ENCODE measurements at regions of chr1 and their contacts with region 1.

Region 1: GRCh38 chr1:175373786-175374623 is 181.4 kb upstream of the KIAA0040 start:
- DNase-seq: no peak
- ATAC-seq: peak; percentile 91
- H3K4me3 ChIP-seq: no peak overlapping the region
- H3K27ac ChIP-seq: no peak overlapping the region
- H3K4me1 ChIP-seq: no peaks in the 10 kb centered on the region
- H3K27me3 ChIP-seq: peaks cover 0 to 2% of the 10 kb centered on the region in 2 experiments; a peak in 3 of 4 replicates
- CTCF ChIP-seq: peak; percentile 65 to 79 (median 75)
- EP300 ChIP-seq: no peak
- POLR2A ChIP-seq: no peak
- RAD21 ChIP-seq: peak; percentile 81

Region 2: DNA sequence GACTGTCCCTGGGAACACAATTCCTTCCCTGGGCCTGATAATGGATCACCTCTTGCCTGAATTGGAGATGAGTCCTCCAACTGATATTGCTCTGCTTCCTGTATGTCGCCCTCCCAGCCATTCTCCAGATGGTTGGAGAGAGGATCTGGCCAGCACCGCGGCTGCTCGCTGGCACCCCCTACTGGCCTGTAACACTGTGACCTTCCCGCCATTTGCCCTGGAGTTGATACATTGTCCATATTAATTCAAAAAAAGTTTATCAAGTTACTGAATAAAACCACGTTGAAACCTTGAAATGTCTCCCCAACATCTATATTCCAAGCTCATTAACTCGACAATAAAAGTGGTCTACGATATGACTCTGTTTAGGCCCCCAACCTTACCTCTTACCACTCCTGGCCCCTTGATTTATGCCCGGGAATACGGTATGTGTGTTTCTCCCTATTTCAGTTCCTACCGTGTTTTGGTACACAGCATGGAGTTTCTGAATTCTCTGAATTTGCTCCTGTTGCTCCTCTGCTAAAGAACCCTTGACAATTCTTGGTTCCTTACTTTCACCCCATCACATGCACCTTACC is 60.4 kb after region 1 on chr1:
- CTCF ChIA-PET with region 1: interaction called, 9 read pairs
- POLR2A ChIA-PET with region 1: no interaction called
- RAD21 ChIA-PET with region 1: no interaction called
- SMC1A ChIA-PET with region 1: interaction called, 6 read pairs
- in situ Hi-C with region 1: no loop called
- intact Hi-C with region 1: loop called (anchors 1 kb)
- DNase-seq: no peak
- ATAC-seq: peak; percentile 46; the same call in 2 of the 3 replicates
- H3K4me3 ChIP-seq: no peak overlapping the region
- H3K27ac ChIP-seq: no peak overlapping the region
- H3K4me1 ChIP-seq: no peaks in the 10 kb centered on the region
- H3K27me3 ChIP-seq: no peaks in the 10 kb centered on the region
- CTCF ChIP-seq: peak; percentile 38 to 73 (median 58)
- EP300 ChIP-seq: no peak
- POLR2A ChIP-seq: no peak
- RAD21 ChIP-seq: peak; percentile 46

Region 3: GRCh38 chr1:175470078-175470477 is 96.1 kb after region 1 on chr1:
- CTCF ChIA-PET with region 1: no interaction called
- POLR2A ChIA-PET with region 1: no interaction called
- RAD21 ChIA-PET with region 1: no interaction called
- SMC1A ChIA-PET with region 1: no interaction called
- in situ Hi-C with region 1: no loop called
- intact Hi-C with region 1: no loop called
- DNase-seq: no peak
- ATAC-seq: no peak
- H3K4me3 ChIP-seq: no peak overlapping the region
- H3K27ac ChIP-seq: no peak overlapping the region
- H3K4me1 ChIP-seq: no peaks in the 10 kb centered on the region
- H3K27me3 ChIP-seq: peaks cover 2 to 6% of the 10 kb centered on the region in 2 experiments; a peak in 2 of 4 replicates
- CTCF ChIP-seq: no peak
- EP300 ChIP-seq: no peak
- POLR2A ChIP-seq: no peak
- RAD21 ChIP-seq: no peak

Region 4: GRCh38 chr1:175481126-175482066 is 107.4 kb after region 1 on chr1:
- CTCF ChIA-PET with region 1: no interaction called
- POLR2A ChIA-PET with region 1: no interaction called
- RAD21 ChIA-PET with region 1: no interaction called
- SMC1A ChIA-PET with region 1: no interaction called
- in situ Hi-C with region 1: no loop called
- intact Hi-C with region 1: loop called (anchors 2 kb)
- DNase-seq: no peak
- ATAC-seq: peak; percentile 79
- H3K4me3 ChIP-seq: no peak overlapping the region
- H3K27ac ChIP-seq: no peak overlapping the region
- H3K4me1 ChIP-seq: no peaks in the 10 kb centered on the region
- H3K27me3 ChIP-seq: peaks cover 0 to 5% of the 10 kb centered on the region in 2 experiments; a peak in 1 of 4 replicates
- CTCF ChIP-seq: peak; percentile 53 to 67 (median 66); a peak in 5 of 6 replicates
- EP300 ChIP-seq: no peak
- POLR2A ChIP-seq: no peak
- RAD21 ChIP-seq: peak; percentile 71

Region 5: GRCh38 chr1:175520186-175520585 is 146.2 kb after region 1 on chr1:
- CTCF ChIA-PET with region 1: no interaction called
- POLR2A ChIA-PET with region 1: no interaction called
- RAD21 ChIA-PET with region 1: no interaction called
- SMC1A ChIA-PET with region 1: no interaction called
- in situ Hi-C with region 1: no loop called
- intact Hi-C with region 1: no loop called
- DNase-seq: no peak
- ATAC-seq: no peak
- H3K4me3 ChIP-seq: no peak overlapping the region
- H3K27ac ChIP-seq: no peak overlapping the region
- H3K4me1 ChIP-seq: no peaks in the 10 kb centered on the region
- H3K27me3 ChIP-seq: no peaks in the 10 kb centered on the region; a peak in 2 of 4 replicates
- CTCF ChIP-seq: no peak
- EP300 ChIP-seq: no peak
- POLR2A ChIP-seq: no peak
- RAD21 ChIP-seq: no peak

Region 6: DNA sequence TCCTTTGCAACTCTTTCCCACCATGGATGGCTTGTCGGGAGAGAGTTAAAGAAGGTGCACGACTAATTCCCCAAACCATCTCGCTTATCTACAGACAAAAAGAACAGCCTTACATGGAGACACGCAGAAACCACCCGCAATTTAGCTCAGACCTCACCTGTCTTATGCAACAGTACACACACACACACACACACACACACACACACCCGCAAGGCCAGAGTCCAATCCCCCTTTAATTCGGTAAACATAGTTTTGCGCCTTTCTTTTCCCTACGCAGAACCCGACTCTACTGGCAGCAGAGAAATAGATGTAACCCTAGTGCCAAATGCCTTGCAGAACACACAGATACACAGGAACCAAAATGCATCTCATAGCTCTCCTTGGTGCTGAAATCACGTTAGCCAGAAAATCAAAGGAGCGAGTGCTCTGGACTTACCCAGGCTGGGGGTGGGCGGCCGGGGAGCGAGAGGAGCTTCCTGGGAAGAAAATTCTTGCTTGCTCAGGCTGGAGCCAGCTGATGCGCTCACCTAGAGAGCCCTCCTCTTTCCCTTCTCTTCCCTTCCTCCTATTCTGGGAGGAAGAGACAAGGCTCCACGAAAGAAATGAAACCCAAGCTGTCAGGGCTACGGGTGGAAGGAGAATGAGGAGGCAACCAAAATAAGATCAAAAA is 368.9 kb after region 1 on chr1:
- CTCF ChIA-PET with region 1: interaction called, 3 read pairs
- POLR2A ChIA-PET with region 1: no interaction called
- RAD21 ChIA-PET with region 1: interaction called, 4 read pairs
- SMC1A ChIA-PET with region 1: interaction called, 4 read pairs
- in situ Hi-C with region 1: no loop called
- intact Hi-C with region 1: loop called (anchors 2 kb)
- DNase-seq: no peak
- ATAC-seq: peak; percentile 66
- H3K4me3 ChIP-seq: no peak overlapping the region
- H3K27ac ChIP-seq: no peak overlapping the region
- H3K4me1 ChIP-seq: no peaks in the 10 kb centered on the region
- H3K27me3 ChIP-seq: 0 out of 4 replicates have a peak, but pooled peaks cover 0 to 4% of the 10 kb centered on the region in 2 experiments
- CTCF ChIP-seq: no peak
- EP300 ChIP-seq: no peak
- POLR2A ChIP-seq: no peak
- RAD21 ChIP-seq: no peak

Region 7: GRCh38 chr1:175887981-175888433 is 514.0 kb after region 1 on chr1:
- CTCF ChIA-PET with region 1: no interaction called
- POLR2A ChIA-PET with region 1: no interaction called
- RAD21 ChIA-PET with region 1: no interaction called
- SMC1A ChIA-PET with region 1: no interaction called
- in situ Hi-C with region 1: no loop called
- intact Hi-C with region 1: loop called (anchors 5 kb)
- DNase-seq: no peak
- ATAC-seq: peak; percentile 99
- H3K4me3 ChIP-seq: no peak overlapping the region
- H3K27ac ChIP-seq: no peak overlapping the region
- H3K4me1 ChIP-seq: no peaks in the 10 kb centered on the region
- H3K27me3 ChIP-seq: no peaks in the 10 kb centered on the region
- CTCF ChIP-seq: peak; percentile 71 to 82 (median 79)
- EP300 ChIP-seq: no peak
- POLR2A ChIP-seq: no peak
- RAD21 ChIP-seq: peak; percentile 67

Region 8: GRCh38 chr1:175947771-175948170 is 573.8 kb after region 1 on chr1:
- CTCF ChIA-PET with region 1: no interaction called
- POLR2A ChIA-PET with region 1: no interaction called
- RAD21 ChIA-PET with region 1: no interaction called
- SMC1A ChIA-PET with region 1: no interaction called
- in situ Hi-C with region 1: no loop called
- intact Hi-C with region 1: loop called (anchors 5 kb)
- DNase-seq: no peak
- ATAC-seq: no peak
- H3K4me3 ChIP-seq: no peak overlapping the region
- H3K27ac ChIP-seq: no peak overlapping the region
- H3K4me1 ChIP-seq: no peaks in the 10 kb centered on the region
- H3K27me3 ChIP-seq: no peaks in the 10 kb centered on the region
- CTCF ChIP-seq: no peak
- EP300 ChIP-seq: no peak
- POLR2A ChIP-seq: no peak
- RAD21 ChIP-seq: no peak

Region 9: GRCh38 chr1:176009951-176010350 is 635.9 kb after region 1 on chr1:
- CTCF ChIA-PET with region 1: no interaction called
- POLR2A ChIA-PET with region 1: no interaction called
- RAD21 ChIA-PET with region 1: no interaction called
- SMC1A ChIA-PET with region 1: no interaction called
- in situ Hi-C with region 1: no loop called
- intact Hi-C with region 1: no loop called
- DNase-seq: no peak
- ATAC-seq: no peak
- H3K4me3 ChIP-seq: no peak overlapping the region
- H3K27ac ChIP-seq: no peak overlapping the region
- H3K4me1 ChIP-seq: no peaks in the 10 kb centered on the region
- H3K27me3 ChIP-seq: no peaks in the 10 kb centered on the region
- CTCF ChIP-seq: no peak
- EP300 ChIP-seq: no peak
- POLR2A ChIP-seq: no peak
- RAD21 ChIP-seq: no peak

Region 10: GRCh38 chr1:176073524-176074157 is 699.6 kb after region 1 on chr1:
- CTCF ChIA-PET with region 1: interaction called, 3 read pairs
- POLR2A ChIA-PET with region 1: no interaction called
- RAD21 ChIA-PET with region 1: no interaction called
- SMC1A ChIA-PET with region 1: interaction called, 3 read pairs
- in situ Hi-C with region 1: loop called (anchors 5 kb)
- intact Hi-C with region 1: loop called (anchors 1 kb)
- DNase-seq: peak; percentile 7
- ATAC-seq: peak; percentile 91
- H3K4me3 ChIP-seq: no peak overlapping the region
- H3K27ac ChIP-seq: no peak overlapping the region
- H3K4me1 ChIP-seq: no peaks in the 10 kb centered on the region
- H3K27me3 ChIP-seq: no peaks in the 10 kb centered on the region
- CTCF ChIP-seq: peak; percentile 48 to 69 (median 61)
- EP300 ChIP-seq: no peak
- POLR2A ChIP-seq: no peak
- RAD21 ChIP-seq: peak; percentile 79

Measured in GM12878 (cell line).